ENCODE measurements at regions of chr17 and their contacts with region 1.

Region 1: GRCh38 chr17:41801374-41802271 is 10.1 kb downstream of the P3H4 start:
- DNase-seq: no peak
- ATAC-seq: peak; percentile 89
- H3K4me3 ChIP-seq: peak overlapping the region; percentile 7 to 19; a peak in 1 of 4 replicates
- H3K27ac ChIP-seq: peak overlapping the region; percentile 78
- H3K4me1 ChIP-seq: peaks cover 18% of the 10 kb centered on the region
- H3K27me3 ChIP-seq: no peaks in the 10 kb centered on the region
- CTCF ChIP-seq: peak; percentile 96

Region 2: GRCh38 chr17:41738077-41738735 is 63.4 kb before region 1 on chr17:
- CTCF ChIA-PET with region 1: interaction called, 8 read pairs
- POLR2A ChIA-PET with region 1: no interaction called
- in situ Hi-C with region 1: no loop called
- intact Hi-C with region 1: loop called (anchors 1 kb)
- DNase-seq: peak; percentile 69
- ATAC-seq: peak; percentile 88
- H3K4me3 ChIP-seq: peak overlapping the region in 1 of 2 experiments; percentile 26; a peak in 1 of 4 replicates
- H3K27ac ChIP-seq: peak overlapping the region; percentile 78
- H3K4me1 ChIP-seq: peaks cover 23% of the 10 kb centered on the region
- H3K27me3 ChIP-seq: no peaks in the 10 kb centered on the region
- CTCF ChIP-seq: peak; percentile 94

Region 3: GRCh38 chr17:41748275-41748674 is 53.3 kb before region 1 on chr17:
- CTCF ChIA-PET with region 1: interaction called, 14 read pairs
- POLR2A ChIA-PET with region 1: interaction called, 6 read pairs
- in situ Hi-C with region 1: no loop called
- intact Hi-C with region 1: no loop called
- DNase-seq: no peak
- ATAC-seq: no peak
- H3K4me3 ChIP-seq: no peak overlapping the region
- H3K27ac ChIP-seq: no peak overlapping the region
- H3K4me1 ChIP-seq: no peaks in the 10 kb centered on the region
- H3K27me3 ChIP-seq: no peaks in the 10 kb centered on the region
- CTCF ChIP-seq: no peak

Region 4: DNA sequence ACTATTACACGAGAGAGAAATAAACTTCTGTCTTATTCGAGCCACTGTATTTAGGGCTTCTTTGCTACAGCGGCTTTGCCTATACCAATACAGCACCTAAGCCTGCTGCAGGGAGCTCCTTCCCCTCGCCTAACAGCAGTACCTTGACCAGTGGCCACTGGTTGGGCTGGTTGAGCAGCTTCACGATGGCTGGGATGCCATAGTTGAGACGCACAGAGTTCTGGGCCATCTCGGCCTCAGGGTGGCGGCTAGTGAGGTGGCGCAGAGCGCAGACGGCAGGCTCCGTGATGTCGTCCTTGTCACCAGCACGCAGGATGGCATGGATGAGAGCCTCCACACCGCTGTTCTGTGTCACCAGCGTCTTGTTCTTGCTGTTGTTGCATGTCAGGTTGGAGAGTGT is 38.8 kb before region 1 on chr17:
- CTCF ChIA-PET with region 1: no interaction called
- POLR2A ChIA-PET with region 1: no interaction called
- in situ Hi-C with region 1: no loop called
- intact Hi-C with region 1: no loop called
- DNase-seq: no peak
- ATAC-seq: 0 out of 2 replicates have a peak, but pooled peaks have one; percentile 19
- H3K4me3 ChIP-seq: no peak overlapping the region
- H3K27ac ChIP-seq: no peak overlapping the region
- H3K4me1 ChIP-seq: no peaks in the 10 kb centered on the region
- H3K27me3 ChIP-seq: no peaks in the 10 kb centered on the region
- CTCF ChIP-seq: no peak

Region 5: DNA sequence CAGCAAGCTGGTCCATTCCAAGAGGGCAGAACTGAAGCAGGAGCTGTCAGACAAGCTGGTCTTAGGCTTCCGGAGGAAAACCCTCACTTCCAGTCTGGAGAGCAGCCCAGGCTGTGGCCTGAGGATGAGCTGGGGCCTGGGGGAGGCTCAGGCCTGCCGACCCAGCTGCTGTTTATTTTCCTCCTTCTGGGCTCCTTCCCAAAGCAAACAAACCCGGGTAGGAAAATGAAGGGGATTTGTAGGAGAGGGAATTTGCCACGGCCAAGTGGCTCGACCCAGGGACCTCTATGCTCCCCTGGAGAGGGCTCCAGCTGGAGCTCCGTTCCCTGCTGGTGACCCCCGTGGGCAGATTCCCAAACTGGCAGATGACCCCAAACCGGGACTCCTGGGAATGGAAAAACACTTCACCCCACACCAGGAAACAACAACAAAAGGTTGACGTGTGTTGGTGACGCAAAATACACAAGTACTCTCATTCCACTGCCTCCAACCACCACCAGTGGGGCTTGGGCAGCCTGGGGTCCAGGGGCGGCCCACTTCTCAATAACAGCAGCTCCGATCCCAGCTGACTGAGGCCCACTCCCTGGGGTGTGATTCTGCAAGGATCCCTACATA is 23.9 kb before region 1 on chr17:
- CTCF ChIA-PET with region 1: interaction called, 6 read pairs
- POLR2A ChIA-PET with region 1: no interaction called
- in situ Hi-C with region 1: no loop called
- intact Hi-C with region 1: loop called (anchors 2 kb)
- DNase-seq: peak; percentile 69
- ATAC-seq: peak; percentile 87
- H3K4me3 ChIP-seq: peak overlapping the region; percentile 1 to 17; a peak in 2 of 4 replicates
- H3K27ac ChIP-seq: peak overlapping the region; percentile 94
- H3K4me1 ChIP-seq: peaks cover 72% of the 10 kb centered on the region
- H3K27me3 ChIP-seq: no peaks in the 10 kb centered on the region
- CTCF ChIP-seq: no peak

Region 6: GRCh38 chr17:41864836-41865595 is 63.4 kb after region 1 on chr17 and contains the start of gene KLHL11:
- CTCF ChIA-PET with region 1: no interaction called
- POLR2A ChIA-PET with region 1: no interaction called
- in situ Hi-C with region 1: no loop called
- intact Hi-C with region 1: no loop called
- DNase-seq: peak; percentile 15
- ATAC-seq: peak; percentile 98
- H3K4me3 ChIP-seq: peak within 1 kb of the TSS; percentile 69 to 85
- H3K27ac ChIP-seq: peak within 1 kb of the TSS; percentile 79
- H3K4me1 ChIP-seq: peaks cover 5% of the 10 kb centered on the region; the same call in 1 of the 2 replicates
- H3K27me3 ChIP-seq: no peaks in the 10 kb centered on the region
- CTCF ChIP-seq: no peak
- total RNA-seq, gene KLHL11: 12.5 TPM

Region 7: DNA sequence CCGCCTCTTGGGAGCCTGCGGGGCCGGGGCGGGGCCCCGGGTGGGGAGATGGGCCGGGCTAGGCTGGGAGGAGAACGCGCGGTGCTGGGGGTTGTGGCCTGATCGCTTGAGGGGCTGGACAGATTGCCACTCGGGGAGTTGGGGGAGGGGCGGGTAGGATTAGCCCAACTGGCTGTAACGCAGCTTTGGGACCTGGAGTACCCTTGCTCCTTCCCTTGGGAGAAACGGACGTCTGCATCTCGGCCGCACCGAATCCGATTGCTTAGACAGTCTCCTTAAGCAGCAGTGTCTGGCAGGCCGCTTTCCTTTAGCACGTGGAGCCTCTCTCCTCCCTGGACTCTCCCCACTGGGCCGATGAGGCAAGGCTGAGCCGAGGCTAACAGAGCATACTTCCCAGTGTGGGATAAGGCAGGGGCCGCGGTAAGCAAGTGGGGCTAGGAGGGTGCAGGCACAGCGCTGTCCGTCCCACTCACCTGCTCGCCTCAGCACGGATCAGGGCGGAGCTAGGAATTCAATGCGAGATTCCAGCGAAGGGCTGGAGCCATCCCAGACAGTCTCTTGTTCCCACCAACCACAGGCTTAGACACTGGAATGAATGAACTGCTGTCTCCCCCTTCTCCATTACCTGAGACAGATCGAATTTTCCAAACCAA is 117.7 kb after region 1 on chr17:
- CTCF ChIA-PET with region 1: no interaction called
- POLR2A ChIA-PET with region 1: no interaction called
- in situ Hi-C with region 1: no loop called
- intact Hi-C with region 1: no loop called
- DNase-seq: no peak
- ATAC-seq: peak; percentile 69
- H3K4me3 ChIP-seq: peak overlapping the region; percentile 55 to 95
- H3K27ac ChIP-seq: peak overlapping the region; percentile 93
- H3K4me1 ChIP-seq: peaks cover 22% of the 10 kb centered on the region
- H3K27me3 ChIP-seq: no peaks in the 10 kb centered on the region
- CTCF ChIP-seq: no peak

Measured in Panc1 (cell line).